ENCODE measurements at regions of chr3 and their contacts with region 1.

Region 1: DNA sequence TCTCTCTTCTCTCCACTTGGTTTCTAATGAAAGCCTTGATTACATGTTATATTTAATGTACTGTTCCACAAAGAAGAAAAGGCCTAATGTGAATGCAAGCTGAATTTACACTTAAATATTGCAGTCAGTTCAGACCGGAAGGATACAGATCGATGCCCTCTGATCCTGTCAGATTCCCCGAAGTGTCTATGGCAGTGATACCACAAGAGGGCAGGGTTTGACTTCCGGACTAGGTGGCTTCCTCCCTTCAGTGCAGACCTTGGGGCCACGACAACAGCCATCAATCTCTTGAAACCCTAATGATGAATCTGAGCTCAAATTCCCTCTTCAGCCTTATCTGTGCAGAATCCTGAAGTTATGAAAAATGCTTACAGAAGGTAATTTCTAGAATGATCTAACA is 29.5 kb downstream of the AGTR1 start:
- DNase-seq: no peak
- ATAC-seq: peak; percentile 76
- H3K4me3 ChIP-seq: no peak overlapping the region
- H3K27ac ChIP-seq: no peak overlapping the region
- H3K4me1 ChIP-seq: no peaks in the 10 kb centered on the region
- H3K27me3 ChIP-seq: no peaks in the 10 kb centered on the region
- CTCF ChIP-seq: peak; percentile 29 to 33 (median 32); a peak in 5 of 6 replicates
- EP300 ChIP-seq: no peak
- POLR2A ChIP-seq: no peak
- RAD21 ChIP-seq: no peak

Region 2: DNA sequence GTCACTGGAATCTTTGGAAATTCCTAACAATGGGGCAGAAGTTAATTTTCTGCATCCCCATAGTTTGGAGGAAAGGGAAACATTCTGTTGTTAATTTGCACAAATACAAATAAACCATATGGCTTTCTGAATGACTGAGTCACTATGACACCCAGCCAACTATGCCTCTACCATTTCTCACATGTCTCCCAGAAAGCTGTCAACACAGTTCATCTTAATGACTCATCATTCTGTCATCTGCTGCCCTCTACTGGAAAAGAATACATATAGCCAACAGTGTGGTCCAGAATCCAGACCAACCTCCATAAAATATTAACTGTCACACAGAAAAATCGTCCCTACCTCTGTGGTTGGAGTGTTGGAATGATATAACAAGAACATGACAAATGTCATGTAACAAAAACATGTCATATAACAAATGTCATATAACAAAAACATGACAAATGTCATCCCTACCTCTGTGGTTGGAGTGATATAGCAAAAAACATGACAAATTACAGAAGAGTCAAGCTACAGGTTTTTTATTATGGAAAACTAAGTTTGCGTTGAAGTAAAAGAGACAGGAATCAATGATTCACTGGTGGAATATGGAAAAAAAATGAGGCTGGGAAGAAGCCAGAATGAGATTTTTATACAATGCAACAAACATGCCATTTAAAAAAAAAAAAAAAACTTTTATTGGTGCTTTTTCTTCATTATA is 216.4 kb after region 1 on chr3:
- CTCF ChIA-PET with region 1: interaction called, 3 read pairs
- POLR2A ChIA-PET with region 1: no interaction called
- RAD21 ChIA-PET with region 1: no interaction called
- SMC1A ChIA-PET with region 1: no interaction called
- in situ Hi-C with region 1: no loop called
- intact Hi-C with region 1: loop called (anchors 1 kb)
- DNase-seq: peak; percentile 19
- ATAC-seq: peak; percentile 97
- H3K4me3 ChIP-seq: no peak overlapping the region
- H3K27ac ChIP-seq: no peak overlapping the region
- H3K4me1 ChIP-seq: no peaks in the 10 kb centered on the region
- H3K27me3 ChIP-seq: peaks cover 0 to 3% of the 10 kb centered on the region in 2 experiments; a peak in 3 of 4 replicates
- CTCF ChIP-seq: peak; percentile 69 to 78 (median 75)
- EP300 ChIP-seq: no peak
- POLR2A ChIP-seq: no peak
- RAD21 ChIP-seq: peak; percentile 76

Measured in GM12878 (cell line).